Kidney (tissue), 22 donors: ENCODE measurements at regions of chr16 and their contacts with region 1.

Region 1: DNA sequence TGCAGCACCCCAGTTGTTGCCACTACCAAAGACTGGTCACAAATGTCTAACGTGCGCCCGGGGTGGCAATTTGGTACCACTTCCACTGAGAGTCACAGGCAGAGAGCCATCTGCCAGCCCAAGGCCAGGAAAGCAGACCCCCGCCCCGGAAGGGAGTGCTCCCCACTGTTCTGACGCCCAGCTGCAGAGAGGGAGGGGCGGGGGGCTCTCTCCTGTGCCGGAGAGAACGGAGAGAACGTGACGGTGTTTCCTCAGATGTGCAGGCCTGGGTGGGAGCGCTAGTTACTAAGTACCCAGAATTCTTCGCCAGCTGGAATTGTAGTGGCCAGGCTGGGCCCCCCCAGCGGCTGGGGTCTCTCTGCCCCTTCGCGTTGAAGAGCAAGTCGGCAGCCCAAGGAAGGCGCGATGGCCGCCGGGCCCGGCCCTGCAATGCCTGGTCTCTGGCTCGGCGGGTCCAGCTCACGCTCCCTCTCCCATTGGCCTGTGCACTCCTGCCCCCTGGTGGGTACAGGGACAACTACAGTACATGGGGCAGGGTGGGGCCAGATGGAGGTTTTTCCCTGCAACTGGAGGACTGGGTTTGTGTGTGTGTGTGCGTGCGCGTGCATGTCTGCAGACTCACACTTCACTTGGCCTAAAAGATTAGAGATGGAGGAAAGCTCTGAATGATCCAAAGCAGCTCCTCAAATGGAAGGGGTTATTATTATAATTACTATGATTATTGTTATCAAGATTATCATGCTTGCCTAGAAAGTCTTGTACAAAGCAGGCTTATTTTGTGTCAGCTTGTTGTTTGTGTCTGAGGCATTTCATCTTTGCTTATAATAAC is 107.1 kb downstream of the AMFR start:
- DNase-seq: peak; percentile 90 to 93 (median 92)
- H3K4me3 ChIP-seq: no peak overlapping the region
- H3K27ac ChIP-seq: no peak overlapping the region
- H3K4me1 ChIP-seq: peaks cover 0 to 4% (median 0%) of the 10 kb centered on the region in 3 donors
- H3K27me3 ChIP-seq: no peaks in the 10 kb centered on the region
- CTCF ChIP-seq: peak; percentile 96

Region 2: DNA sequence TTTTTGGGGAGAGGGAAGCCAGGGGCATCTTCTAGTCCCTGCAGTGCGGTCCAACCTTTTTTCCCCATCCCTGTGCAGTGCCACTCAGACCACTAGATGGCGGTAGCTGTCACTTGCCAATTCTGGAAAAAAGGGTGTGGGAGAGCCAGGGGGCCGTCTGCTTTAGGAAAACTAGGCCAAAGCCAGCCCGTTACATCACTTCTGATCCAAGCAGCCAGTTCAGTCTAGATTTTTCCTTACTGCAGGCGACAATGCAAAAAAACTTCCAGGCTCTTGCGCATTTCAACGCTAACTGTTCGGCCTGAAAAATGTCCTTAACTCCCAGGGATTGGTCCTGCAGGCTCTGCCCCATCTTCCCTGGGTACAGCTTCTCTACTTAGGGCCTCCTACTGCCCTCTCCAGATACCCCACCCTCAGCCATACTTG is 373.8 kb before region 1 on chr16:
- intact Hi-C with region 1: loop called (anchors 10 kb)
- DNase-seq: peak; percentile 75 to 94 (median 87)
- H3K4me3 ChIP-seq: no peak overlapping the region
- H3K27ac ChIP-seq: no peak overlapping the region
- H3K4me1 ChIP-seq: peaks cover 0 to 5% (median 0%) of the 10 kb centered on the region in 3 donors
- H3K27me3 ChIP-seq: no peaks in the 10 kb centered on the region
- CTCF ChIP-seq: peak; percentile 92